ENCODE measurements at regions of chrX and their contacts with region 1.

Region 1: GRCh38 chrX:134254511-134254910 is 17.5 kb downstream of the CCDC160 start:
- DNase-seq: no peak
- H3K4me3 ChIP-seq: no peak overlapping the region
- H3K27ac ChIP-seq: no peak overlapping the region
- H3K4me1 ChIP-seq: no peaks in the 10 kb centered on the region
- H3K27me3 ChIP-seq: no peaks in the 10 kb centered on the region
- CTCF ChIP-seq: no peak
- POLR2A ChIP-seq: no peak

Region 2: GRCh38 chrX:134244035-134244434 is 10.5 kb before region 1 on chrX:
- CTCF ChIA-PET with region 1: interaction called, 10 read pairs
- POLR2A ChIA-PET with region 1: no interaction called
- dilution Hi-C with region 1: no loop called
- intact Hi-C with region 1: no loop called
- DNase-seq: peak; percentile 29
- H3K4me3 ChIP-seq: no peak overlapping the region
- H3K27ac ChIP-seq: no peak overlapping the region
- H3K4me1 ChIP-seq: no peaks in the 10 kb centered on the region
- H3K27me3 ChIP-seq: no peaks in the 10 kb centered on the region
- CTCF ChIP-seq: no peak
- POLR2A ChIP-seq: no peak

Measured in endothelial cell of umbilical vein (primary cell).